ENCODE measurements at regions of chr2 and their contacts with region 1.

Region 1: DNA sequence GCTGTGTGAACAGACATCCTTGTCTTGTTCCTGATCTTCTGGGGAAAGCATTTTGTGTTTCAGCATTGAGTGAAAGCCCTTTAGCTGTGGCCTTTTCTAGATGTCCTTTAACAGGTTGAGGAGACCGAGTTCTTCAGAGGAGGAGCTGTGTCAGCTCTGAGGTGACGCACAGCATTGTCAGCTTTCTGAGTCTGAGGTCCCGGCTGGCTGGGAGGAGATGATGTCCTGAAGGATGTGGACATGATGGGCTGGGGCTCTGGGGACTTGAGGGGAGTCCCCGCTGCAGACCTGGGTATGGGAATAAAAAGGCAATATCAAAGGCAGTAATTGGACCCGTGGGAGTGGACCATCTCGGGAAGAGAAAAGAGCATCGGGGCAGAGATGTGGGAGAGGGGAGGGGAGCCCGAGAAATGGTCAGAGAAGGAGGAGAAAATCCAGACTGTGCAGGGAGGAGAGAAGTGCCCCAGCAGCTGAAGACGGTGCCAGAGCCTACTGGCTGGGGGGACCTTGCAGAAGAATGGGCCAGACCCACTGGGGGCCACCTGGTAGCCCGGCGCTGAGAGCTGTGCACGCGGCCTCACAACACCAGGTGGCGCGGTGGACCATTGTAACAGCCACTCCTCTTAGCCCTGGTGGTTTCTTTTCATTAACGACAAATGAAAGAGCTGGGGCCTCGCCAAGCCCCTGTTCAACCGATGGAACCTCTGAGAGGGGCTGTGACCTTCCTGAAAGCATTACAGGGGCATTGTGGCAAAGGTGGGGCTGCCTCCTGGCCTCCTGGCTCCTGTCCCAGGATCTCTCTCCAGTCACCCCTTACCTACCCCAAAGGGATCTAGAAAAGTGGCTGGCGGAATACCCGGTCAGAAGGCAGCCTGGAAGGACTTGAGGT is 61.6 kb downstream of the ST3GAL5 start:
- DNase-seq: peak; percentile 74 to 81 (median 79)
- ATAC-seq: peak; percentile 98
- H3K4me3 ChIP-seq: no peak overlapping the region
- H3K27ac ChIP-seq: no peak overlapping the region; the same call in 2 of the 3 replicates
- H3K4me1 ChIP-seq: peaks cover 7 to 8% of the 10 kb centered on the region in 2 experiments; a peak in 4 of 5 replicates
- H3K27me3 ChIP-seq: peaks cover 3 to 6% of the 10 kb centered on the region in 2 experiments; a peak in 3 of 5 replicates
- CTCF ChIP-seq: peak; percentile 89 to 95 (median 93)
- EP300 ChIP-seq: no peak
- POLR2A ChIP-seq: no peak
- RAD21 ChIP-seq: peak; percentile 96 to 98

Region 2: DNA sequence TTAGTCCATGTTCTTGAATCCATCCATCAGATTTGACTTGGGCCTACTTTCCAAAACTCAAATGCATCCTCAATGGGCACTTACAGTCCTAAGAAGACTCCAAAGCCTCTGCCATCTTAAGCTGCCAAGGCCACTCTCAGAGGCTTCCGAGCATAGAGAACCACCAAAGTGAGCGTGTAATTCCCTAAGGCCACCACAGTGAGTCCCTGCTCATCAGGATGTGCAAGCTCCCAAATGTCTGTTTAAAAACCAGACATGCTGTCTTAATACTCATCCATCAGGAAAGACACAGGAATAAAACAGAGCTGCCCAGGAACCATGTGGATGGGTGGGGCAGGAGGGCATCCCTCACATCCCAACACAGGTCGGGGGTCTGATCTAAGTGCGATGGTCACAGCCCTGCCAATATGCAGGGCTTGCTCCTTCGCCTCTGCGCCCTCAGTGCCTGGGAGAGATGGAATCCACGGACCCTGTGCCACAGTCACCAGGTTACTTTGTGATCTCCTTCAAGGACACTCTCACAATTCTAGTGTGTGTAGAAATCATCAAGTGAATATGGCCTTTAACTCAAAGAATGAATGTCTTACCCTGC is 198.1 kb after region 1 on chr2:
- CTCF ChIA-PET with region 1: no interaction called
- POLR2A ChIA-PET with region 1: interaction called, 3 read pairs
- in situ Hi-C with region 1: no loop called
- intact Hi-C with region 1: loop called (anchors 5 kb)
- DNase-seq: no peak
- ATAC-seq: peak; percentile 39
- H3K4me3 ChIP-seq: no peak overlapping the region
- H3K27ac ChIP-seq: no peak overlapping the region
- H3K4me1 ChIP-seq: peaks cover 0 to 10% of the 10 kb centered on the region in 2 experiments; a peak in 2 of 5 replicates
- H3K27me3 ChIP-seq: no peaks in the 10 kb centered on the region
- CTCF ChIP-seq: peak; percentile 4 to 21 (median 18); a peak in 1 of 6 replicates
- EP300 ChIP-seq: no peak
- POLR2A ChIP-seq: no peak
- RAD21 ChIP-seq: peak in 1 of 2 experiments; percentile 25; a peak in 1 of 4 replicates

Region 3: GRCh38 chr2:86079981-86080911 is 253.0 kb after region 1 on chr2:
- CTCF ChIA-PET with region 1: interaction called, 129 read pairs
- POLR2A ChIA-PET with region 1: interaction called, 9 read pairs
- in situ Hi-C with region 1: loop called (anchors 5 kb)
- intact Hi-C with region 1: loop called (anchors 1 kb)
- DNase-seq: peak; percentile 38 to 75 (median 54)
- ATAC-seq: peak; percentile 99
- H3K4me3 ChIP-seq: no peak overlapping the region
- H3K27ac ChIP-seq: no peak overlapping the region
- H3K4me1 ChIP-seq: no peaks in the 10 kb centered on the region; a peak in 1 of 5 replicates
- H3K27me3 ChIP-seq: no peaks in the 10 kb centered on the region
- CTCF ChIP-seq: peak; percentile 80 to 87 (median 85)
- EP300 ChIP-seq: no peak
- POLR2A ChIP-seq: no peak
- RAD21 ChIP-seq: peak; percentile 85 to 89

Region 4: DNA sequence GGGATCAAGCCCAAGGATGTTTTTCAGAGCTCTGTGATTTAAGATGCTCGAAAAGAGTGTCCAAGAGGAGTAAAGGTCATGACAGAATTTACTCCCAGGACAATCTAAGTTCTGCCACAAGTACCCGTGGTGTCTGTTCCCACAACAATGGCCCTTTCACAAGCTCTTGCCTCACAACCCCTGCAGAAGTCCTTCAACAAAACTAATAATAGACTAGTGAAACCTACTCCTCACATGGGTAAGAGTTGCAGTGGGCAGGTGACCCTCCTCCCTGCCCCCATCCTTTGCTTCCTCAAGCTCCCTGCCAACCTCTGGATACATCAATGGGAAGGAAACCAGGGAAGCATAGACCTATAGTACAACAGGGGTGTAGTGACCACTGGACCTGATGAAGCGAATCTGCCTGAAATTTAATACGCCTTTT is 313.7 kb after region 1 on chr2:
- CTCF ChIA-PET with region 1: no interaction called
- POLR2A ChIA-PET with region 1: no interaction called
- in situ Hi-C with region 1: no loop called
- intact Hi-C with region 1: no loop called
- DNase-seq: no peak
- ATAC-seq: peak; percentile 32
- H3K4me3 ChIP-seq: no peak overlapping the region
- H3K27ac ChIP-seq: no peak overlapping the region
- H3K4me1 ChIP-seq: no peaks in the 10 kb centered on the region
- H3K27me3 ChIP-seq: no peaks in the 10 kb centered on the region
- CTCF ChIP-seq: no peak
- EP300 ChIP-seq: no peak
- POLR2A ChIP-seq: peak; percentile 17; the same call in 1 of the 2 replicates
- RAD21 ChIP-seq: no peak

Region 5: GRCh38 chr2:86221066-86221684 is 393.9 kb after region 1 on chr2:
- CTCF ChIA-PET with region 1: interaction called, 3 read pairs
- POLR2A ChIA-PET with region 1: no interaction called
- in situ Hi-C with region 1: no loop called
- intact Hi-C with region 1: loop called (anchors 10 kb)
- DNase-seq: peak; percentile 74 to 81 (median 78)
- ATAC-seq: peak; percentile 81
- H3K4me3 ChIP-seq: no peak overlapping the region
- H3K27ac ChIP-seq: no peak overlapping the region
- H3K4me1 ChIP-seq: peaks cover 21 to 29% of the 10 kb centered on the region in 2 experiments; a peak in 3 of 5 replicates
- H3K27me3 ChIP-seq: no peaks in the 10 kb centered on the region
- CTCF ChIP-seq: peak; percentile 94 to 99 (median 98)
- EP300 ChIP-seq: no peak
- POLR2A ChIP-seq: no peak
- RAD21 ChIP-seq: peak; percentile 88 to 89

Region 6: GRCh38 chr2:86319700-86320580 is 492.7 kb after region 1 on chr2:
- CTCF ChIA-PET with region 1: no interaction called
- POLR2A ChIA-PET with region 1: no interaction called
- in situ Hi-C with region 1: no loop called
- intact Hi-C with region 1: no loop called
- DNase-seq: no peak
- ATAC-seq: no peak
- H3K4me3 ChIP-seq: no peak overlapping the region
- H3K27ac ChIP-seq: no peak overlapping the region
- H3K4me1 ChIP-seq: no peaks in the 10 kb centered on the region
- H3K27me3 ChIP-seq: peaks cover 20 to 30% of the 10 kb centered on the region in 2 experiments
- CTCF ChIP-seq: no peak
- EP300 ChIP-seq: no peak
- POLR2A ChIP-seq: no peak
- RAD21 ChIP-seq: no peak

Region 7: GRCh38 chr2:86368161-86368824 is 541.1 kb after region 1 on chr2:
- CTCF ChIA-PET with region 1: interaction called, 3 read pairs
- POLR2A ChIA-PET with region 1: no interaction called
- in situ Hi-C with region 1: loop called (anchors 10 kb)
- intact Hi-C with region 1: loop called (anchors 5 kb)
- DNase-seq: peak; percentile 63 to 82 (median 66)
- ATAC-seq: peak; percentile 88
- H3K4me3 ChIP-seq: no peak overlapping the region
- H3K27ac ChIP-seq: no peak overlapping the region
- H3K4me1 ChIP-seq: no peaks in the 10 kb centered on the region; a peak in 2 of 5 replicates
- H3K27me3 ChIP-seq: peaks cover 2 to 13% of the 10 kb centered on the region in 2 experiments; a peak in 4 of 5 replicates
- CTCF ChIP-seq: peak; percentile 69 to 76 (median 72)
- EP300 ChIP-seq: no peak
- POLR2A ChIP-seq: no peak
- RAD21 ChIP-seq: peak; percentile 45 to 50